Common myeloid progenitor, CD34-positive (primary cell): ENCODE measurements at regions of chr14 and their contacts with region 1.

Region 1: DNA sequence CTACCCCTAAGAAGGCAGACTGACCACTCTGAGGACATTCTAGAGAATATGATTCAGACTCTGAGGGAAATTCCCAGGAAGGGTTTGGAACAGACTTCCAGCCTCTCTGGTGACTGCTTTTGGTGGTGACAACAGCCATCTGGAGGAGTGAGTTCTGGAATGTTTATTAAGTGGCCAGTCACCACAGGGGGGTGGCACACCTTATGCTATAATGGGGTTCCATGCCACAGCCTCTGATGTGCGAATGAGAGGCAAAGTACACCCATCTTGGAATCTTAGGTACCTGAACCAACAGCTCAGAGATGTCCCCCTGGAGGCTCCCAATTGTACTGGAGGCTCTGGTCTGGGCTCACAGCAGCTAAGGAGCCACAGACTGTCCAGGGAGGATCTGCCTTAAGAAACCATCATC is 9.5 kb upstream of the TINF2 start:
- DNase-seq: no peak
- H3K4me3 ChIP-seq: no peak overlapping the region
- H3K27ac ChIP-seq: no peak overlapping the region
- H3K4me1 ChIP-seq: no peaks in the 10 kb centered on the region
- H3K27me3 ChIP-seq: no peaks in the 10 kb centered on the region

Region 2: GRCh38 chr14:24271134-24271833 is 19.4 kb after region 1 on chr14 and contains the start of gene RABGGTA:
- CTCF ChIA-PET with region 1: interaction called, 27 read pairs
- POLR2A ChIA-PET with region 1: interaction called, 3 read pairs
- DNase-seq: peak; percentile 93 to 96 (median 96)
- H3K4me3 ChIP-seq: peak within 1 kb of the TSS; percentile 74 to 96 (median 85)
- H3K27ac ChIP-seq: peak within 1 kb of the TSS; percentile 80 to 94
- H3K4me1 ChIP-seq: peaks cover 2 to 38% (median 18%) of the 10 kb centered on the region in 4 experiments
- H3K27me3 ChIP-seq: no peaks in the 10 kb centered on the region

Region 3: GRCh38 chr14:24279301-24280186 is 27.7 kb after region 1 on chr14:
- CTCF ChIA-PET with region 1: interaction called, 13 read pairs
- POLR2A ChIA-PET with region 1: no interaction called
- DNase-seq: peak; percentile 79 to 89 (median 88)
- H3K4me3 ChIP-seq: peak overlapping the region in 1 of 7 experiments; percentile 1
- H3K27ac ChIP-seq: no peak overlapping the region
- H3K4me1 ChIP-seq: peaks cover 19 to 62% (median 38%) of the 10 kb centered on the region in 4 experiments
- H3K27me3 ChIP-seq: no peaks in the 10 kb centered on the region